ENCODE measurements at regions of chr19 and their contacts with region 1.

Region 1: GRCh38 chr19:34428549-34429285 is 536 bp downstream of the UBA2 start:
- H3K4me3 ChIP-seq: peak overlapping the region; percentile 75
- H3K27ac ChIP-seq: peak overlapping the region; percentile 98
- H3K4me1 ChIP-seq: peaks cover 39% of the 10 kb centered on the region
- CTCF ChIP-seq: peak; percentile 18; the same call in 1 of the 2 replicates

Region 2: GRCh38 chr19:34364830-34365462 is 63.8 kb before region 1 on chr19 and contains the start of gene GPI:
- CTCF ChIA-PET with region 1: interaction called, 7 read pairs
- POLR2A ChIA-PET with region 1: interaction called, 13 read pairs
- H3K4me3 ChIP-seq: peak within 1 kb of the TSS; percentile 64
- H3K27ac ChIP-seq: peak within 1 kb of the TSS; percentile 89
- H3K4me1 ChIP-seq: peaks cover 17% of the 10 kb centered on the region
- CTCF ChIP-seq: no peak

Region 3: DNA sequence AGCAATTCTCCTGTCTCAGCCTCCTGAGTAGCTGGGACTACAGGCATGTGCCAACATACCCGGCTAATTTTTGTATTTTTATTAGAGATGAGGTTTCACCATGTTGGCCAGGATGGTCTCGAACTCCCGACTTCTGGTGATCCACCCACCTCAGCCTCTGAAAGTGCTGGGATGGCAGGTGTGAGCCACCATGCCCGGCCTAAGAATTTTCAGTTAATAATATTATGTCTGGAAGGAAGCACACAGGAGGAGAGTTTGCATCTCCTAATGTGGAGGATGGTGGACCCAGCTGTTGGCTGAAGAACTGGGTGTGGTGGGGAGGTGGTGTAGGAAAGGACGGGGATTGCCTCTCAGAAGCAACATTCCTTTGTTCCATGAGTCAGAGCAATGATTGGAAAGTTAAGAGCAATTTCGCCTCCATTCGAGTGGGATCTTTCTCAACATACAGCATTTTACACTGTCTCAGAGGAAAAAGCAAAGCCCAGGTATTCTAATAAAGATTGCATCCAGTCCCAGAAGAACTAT is 12.6 kb before region 1 on chr19:
- CTCF ChIA-PET with region 1: interaction called, 13 read pairs
- POLR2A ChIA-PET with region 1: interaction called, 9 read pairs
- H3K4me3 ChIP-seq: no peak overlapping the region
- H3K27ac ChIP-seq: no peak overlapping the region
- H3K4me1 ChIP-seq: no peaks in the 10 kb centered on the region
- CTCF ChIP-seq: no peak

Region 4: GRCh38 chr19:34448191-34448590 is 19.5 kb after region 1 on chr19:
- CTCF ChIA-PET with region 1: interaction called, 69 read pairs
- POLR2A ChIA-PET with region 1: interaction called, 6 read pairs
- H3K4me3 ChIP-seq: no peak overlapping the region
- H3K27ac ChIP-seq: 0 out of 2 replicates have a peak overlapping the region, but pooled peaks have one; percentile 27
- H3K4me1 ChIP-seq: no peaks in the 10 kb centered on the region
- CTCF ChIP-seq: no peak

Region 5: DNA sequence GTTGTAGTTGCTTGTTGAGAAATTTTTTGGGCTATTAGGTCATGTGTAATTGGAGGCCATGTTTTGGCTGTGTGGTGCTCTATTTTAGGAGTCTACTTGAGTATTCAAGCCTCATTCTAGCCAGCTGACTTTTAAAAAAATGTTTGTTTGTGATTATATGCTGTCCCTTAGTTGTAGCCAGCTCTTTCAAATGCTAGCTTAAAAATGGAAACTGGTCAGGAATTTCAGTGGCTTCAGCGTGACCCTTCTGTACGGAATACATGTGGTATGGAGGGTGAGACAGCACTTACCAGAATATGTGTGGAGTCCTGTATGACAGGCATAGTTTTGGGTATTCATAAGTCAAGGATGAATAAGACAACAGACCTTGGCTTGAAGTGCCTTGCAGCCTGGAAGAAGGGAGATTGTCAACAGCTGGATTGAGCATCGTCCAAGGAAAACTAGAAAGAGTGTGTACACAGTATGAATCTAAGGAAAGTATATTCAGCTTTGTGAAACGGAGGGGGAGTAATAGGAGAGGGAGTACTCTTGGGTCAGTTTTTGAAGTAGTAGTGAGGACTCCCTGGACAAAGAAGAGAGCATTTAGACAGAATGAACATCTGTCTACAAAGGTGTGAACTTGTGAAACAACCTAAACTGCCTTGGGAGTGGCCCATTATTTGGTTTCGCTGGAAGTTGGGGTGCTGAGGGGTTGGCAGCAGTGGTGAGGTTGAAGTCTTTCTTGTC is 32.8 kb after region 1 on chr19:
- CTCF ChIA-PET with region 1: interaction called, 11 read pairs
- POLR2A ChIA-PET with region 1: interaction called, 10 read pairs
- H3K4me3 ChIP-seq: no peak overlapping the region
- H3K27ac ChIP-seq: 0 out of 2 replicates have a peak overlapping the region, but pooled peaks have one; percentile 40
- H3K4me1 ChIP-seq: no peaks in the 10 kb centered on the region
- CTCF ChIP-seq: no peak

Region 6: DNA sequence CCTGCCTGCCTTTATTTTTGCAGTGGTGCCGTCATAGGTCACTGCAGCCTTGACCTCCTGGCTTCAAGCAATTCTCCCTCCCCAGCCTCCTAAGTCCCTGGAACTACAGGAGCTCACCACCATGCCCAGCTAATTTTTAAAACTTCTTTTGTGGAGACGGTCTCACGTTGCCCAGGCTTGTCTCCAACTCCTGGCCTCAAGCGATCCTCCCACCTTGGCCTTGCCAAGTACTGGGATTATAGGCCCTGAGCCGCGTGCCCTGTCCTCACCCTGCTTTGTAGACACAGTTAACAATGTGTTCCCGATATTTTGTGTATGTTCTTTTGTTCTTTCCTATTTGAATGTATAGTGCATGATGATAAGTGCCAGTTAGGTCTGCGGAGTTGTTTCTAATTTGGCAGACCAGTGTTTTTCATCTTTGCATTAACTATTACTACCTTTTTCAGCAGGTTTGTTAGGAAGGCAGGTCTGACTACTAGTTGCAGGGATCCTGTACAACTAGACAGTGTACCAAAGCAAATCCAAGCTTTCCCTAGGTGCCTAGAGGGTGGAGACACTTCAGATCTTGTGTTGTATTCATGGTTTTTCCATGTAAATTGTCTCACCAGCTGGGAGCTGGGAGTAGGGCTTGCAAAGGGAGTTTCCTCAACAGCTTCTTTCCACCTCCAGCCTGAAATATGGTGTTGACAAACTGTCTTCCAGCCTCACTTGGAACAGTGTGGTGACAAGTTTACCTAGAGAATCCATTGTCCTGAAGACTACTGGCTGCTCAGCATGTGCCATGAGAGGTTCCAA is 43.4 kb after region 1 on chr19:
- CTCF ChIA-PET with region 1: interaction called, 10 read pairs
- POLR2A ChIA-PET with region 1: interaction called, 3 read pairs
- H3K4me3 ChIP-seq: no peak overlapping the region
- H3K27ac ChIP-seq: no peak overlapping the region
- H3K4me1 ChIP-seq: no peaks in the 10 kb centered on the region; the same call in 1 of the 2 replicates
- CTCF ChIP-seq: no peak